PC-9 (cell line): ENCODE measurements at regions of chr7 and their contacts with region 1.

Region 1: DNA sequence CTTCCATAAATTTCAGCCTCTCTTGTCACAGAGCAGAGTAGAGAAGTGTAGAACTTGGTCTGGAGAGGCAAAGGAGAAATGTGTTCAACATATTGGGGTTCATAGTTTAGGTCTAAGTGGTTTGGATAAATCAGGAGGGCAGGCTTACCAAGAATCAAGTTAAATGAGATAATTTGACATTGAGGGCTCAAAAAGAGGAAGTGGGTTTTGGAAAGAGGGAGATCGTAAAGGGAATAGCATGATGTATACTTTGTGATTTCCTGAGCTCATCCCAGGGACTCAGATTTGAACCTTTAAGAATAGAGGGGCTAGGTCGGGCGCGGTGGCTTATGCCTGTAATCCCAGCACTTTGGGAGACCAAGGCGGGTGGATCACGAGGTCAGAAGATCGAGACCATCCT is 34.7 kb upstream of the NPY start:
- DNase-seq: no peak
- H3K4me3 ChIP-seq: no peak overlapping the region
- H3K27ac ChIP-seq: no peak overlapping the region
- H3K4me1 ChIP-seq: no peaks in the 10 kb centered on the region
- H3K27me3 ChIP-seq: no peaks in the 10 kb centered on the region
- CTCF ChIP-seq: no peak

Region 2: DNA sequence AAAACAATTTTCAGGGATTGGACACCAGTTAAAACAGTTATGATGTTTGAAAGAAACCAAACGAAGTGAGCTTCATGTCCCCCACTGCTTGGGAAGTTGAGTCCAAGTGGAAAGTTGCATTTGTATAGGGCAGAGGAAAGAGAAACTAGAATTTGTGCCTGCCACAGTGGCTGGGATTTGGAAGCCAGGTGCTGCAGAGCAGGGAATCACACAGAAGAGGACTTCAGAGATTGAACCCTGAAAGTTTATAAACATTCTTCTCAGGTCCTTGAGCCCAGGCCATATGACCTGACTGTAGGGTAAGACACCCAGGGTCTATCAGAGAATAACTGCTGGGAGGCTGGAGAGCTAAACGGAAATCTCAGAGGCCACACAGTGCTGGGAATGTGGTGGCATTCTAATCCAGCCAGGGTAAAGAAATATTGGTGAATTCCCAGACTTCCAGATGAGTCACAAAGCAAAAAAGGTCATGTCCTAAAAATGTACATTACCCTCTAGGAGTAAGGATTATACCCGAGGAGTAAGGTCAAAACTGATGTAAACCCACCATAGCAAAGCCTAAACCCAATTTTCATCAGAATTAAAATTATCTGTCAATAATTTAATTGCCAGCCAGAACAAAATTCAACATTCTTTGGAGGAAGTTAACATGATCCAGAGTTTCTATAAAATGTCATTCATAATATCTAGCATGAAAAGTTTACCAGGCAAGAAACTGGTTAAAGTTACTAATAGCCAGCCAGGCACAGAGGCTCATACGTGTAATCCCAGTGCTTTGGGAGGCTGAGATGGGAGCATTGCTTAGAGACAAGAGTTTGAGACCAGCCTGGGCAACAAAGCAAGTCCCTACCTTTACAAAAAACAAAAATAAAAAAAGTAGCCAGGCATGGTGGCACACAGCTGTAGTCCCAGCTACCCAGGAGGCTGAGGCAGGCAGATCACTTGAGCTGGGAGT is 1457.8 kb before region 1 on chr7:
- CTCF ChIA-PET with region 1: no interaction called
- POLR2A ChIA-PET with region 1: interaction called, 17 read pairs
- intact Hi-C with region 1: no loop called
- DNase-seq: no peak
- H3K4me3 ChIP-seq: no peak overlapping the region
- H3K27ac ChIP-seq: no peak overlapping the region
- H3K4me1 ChIP-seq: no peaks in the 10 kb centered on the region
- H3K27me3 ChIP-seq: no peaks in the 10 kb centered on the region
- CTCF ChIP-seq: no peak

Region 3: DNA sequence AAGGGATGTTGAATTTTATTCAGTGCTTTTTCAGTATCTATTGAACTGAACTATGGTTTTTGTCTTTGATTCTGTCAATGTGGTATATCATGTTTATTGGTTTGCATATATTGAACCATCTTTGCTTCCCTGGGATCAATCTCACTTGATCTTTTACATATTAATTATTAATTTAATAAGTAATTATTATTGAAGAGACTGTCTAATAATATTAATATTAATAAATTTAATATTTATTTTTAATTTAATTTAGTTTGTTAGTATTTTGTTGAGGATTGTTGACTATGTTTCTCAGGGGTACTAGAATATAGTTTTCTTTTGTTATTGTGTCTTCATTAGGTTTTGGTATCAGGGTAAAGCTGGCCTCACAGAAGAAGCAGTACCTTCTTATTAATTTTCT is 691.0 kb before region 1 on chr7:
- CTCF ChIA-PET with region 1: no interaction called
- POLR2A ChIA-PET with region 1: no interaction called
- intact Hi-C with region 1: no loop called
- DNase-seq: no peak
- H3K4me3 ChIP-seq: no peak overlapping the region
- H3K27ac ChIP-seq: no peak overlapping the region
- H3K4me1 ChIP-seq: no peaks in the 10 kb centered on the region
- H3K27me3 ChIP-seq: no peaks in the 10 kb centered on the region
- CTCF ChIP-seq: no peak

Region 4: GRCh38 chr7:24545215-24545614 is 295.9 kb after region 1 on chr7:
- CTCF ChIA-PET with region 1: no interaction called
- POLR2A ChIA-PET with region 1: no interaction called
- intact Hi-C with region 1: no loop called
- DNase-seq: no peak
- H3K4me3 ChIP-seq: no peak overlapping the region
- H3K27ac ChIP-seq: no peak overlapping the region
- H3K4me1 ChIP-seq: no peaks in the 10 kb centered on the region
- H3K27me3 ChIP-seq: no peaks in the 10 kb centered on the region
- CTCF ChIP-seq: no peak